ENCODE measurements at regions of chr2 and their contacts with region 1.

Region 1: DNA sequence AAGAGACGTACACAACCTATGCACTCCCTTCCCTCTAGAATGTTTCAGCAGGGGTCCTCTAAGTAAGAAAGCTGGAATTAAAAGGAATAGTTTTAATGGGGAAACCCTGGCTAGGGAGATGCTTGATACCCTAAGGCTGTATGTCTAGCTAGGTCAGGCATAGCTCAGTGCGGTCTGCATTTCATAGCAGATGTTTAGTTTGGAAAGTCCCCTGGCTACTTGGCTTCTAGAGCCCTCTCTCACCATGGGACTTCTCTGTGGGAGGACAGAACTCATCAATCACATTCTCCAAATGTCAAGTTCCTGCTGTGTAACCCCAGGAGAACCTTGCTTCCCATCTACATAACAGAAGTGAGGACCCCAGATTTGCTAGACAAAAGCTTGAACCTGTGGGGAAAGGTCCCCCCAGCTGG is 24.1 kb upstream of the ANXA4 start:
- DNase-seq: no peak
- H3K4me3 Mint-ChIP-seq: no peak overlapping the region
- H3K27ac Mint-ChIP-seq: no peak overlapping the region
- H3K4me1 Mint-ChIP-seq: peaks cover 15% of the 10 kb centered on the region
- H3K27me3 Mint-ChIP-seq: no peaks in the 10 kb centered on the region

Region 2: GRCh38 chr2:69375494-69376353 is 342.1 kb before region 1 on chr2:
- intact Hi-C with region 1: loop called (anchors 5 kb)
- DNase-seq: no peak
- H3K4me3 Mint-ChIP-seq: no peak overlapping the region
- H3K27ac Mint-ChIP-seq: no peak overlapping the region
- H3K4me1 Mint-ChIP-seq: peaks cover 20% of the 10 kb centered on the region
- H3K27me3 Mint-ChIP-seq: no peaks in the 10 kb centered on the region

Region 3: GRCh38 chr2:69559442-69560146 is 158.3 kb before region 1 on chr2:
- intact Hi-C with region 1: loop called (anchors 1 kb)
- DNase-seq: no peak
- H3K4me3 Mint-ChIP-seq: peak overlapping the region; percentile 7
- H3K27ac Mint-ChIP-seq: peak overlapping the region; percentile 52
- H3K4me1 Mint-ChIP-seq: peaks cover 67% of the 10 kb centered on the region
- H3K27me3 Mint-ChIP-seq: no peaks in the 10 kb centered on the region

Region 4: DNA sequence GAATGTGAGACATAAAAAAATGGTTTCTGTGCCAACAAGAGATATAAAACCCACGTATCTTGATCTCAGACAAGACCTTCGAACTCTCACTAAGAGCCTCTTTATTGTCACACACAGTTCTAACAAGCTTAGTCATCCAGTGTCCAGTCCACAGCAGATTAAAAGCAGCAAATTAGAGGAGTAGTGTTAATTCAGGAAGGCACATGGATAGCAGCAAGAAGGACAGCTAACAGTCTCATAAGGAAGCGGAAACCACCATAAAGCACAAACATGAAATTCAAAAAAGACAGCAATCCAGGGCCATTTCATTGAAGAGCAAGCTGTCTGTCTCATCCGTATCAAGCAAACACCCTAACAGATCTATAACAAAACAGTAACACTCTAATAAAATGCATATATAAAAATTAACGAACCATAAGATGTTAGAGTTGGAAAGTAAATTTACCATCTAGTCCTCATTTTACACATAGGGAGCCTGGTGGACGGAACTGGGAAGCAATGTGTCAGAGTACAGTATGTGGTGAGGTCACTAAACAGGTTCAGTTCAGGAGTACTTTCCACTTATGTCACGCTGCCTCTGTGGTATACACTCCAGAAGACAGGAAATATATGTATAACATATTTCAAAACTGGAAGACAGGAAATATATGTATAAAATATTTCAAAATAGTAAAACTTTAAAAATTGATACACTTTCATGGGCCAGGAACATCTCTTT is 92.6 kb before region 1 on chr2:
- intact Hi-C with region 1: loop called (anchors 5 kb)
- DNase-seq: no peak
- H3K4me3 Mint-ChIP-seq: no peak overlapping the region
- H3K27ac Mint-ChIP-seq: no peak overlapping the region
- H3K4me1 Mint-ChIP-seq: peaks cover 15% of the 10 kb centered on the region
- H3K27me3 Mint-ChIP-seq: no peaks in the 10 kb centered on the region

Region 5: GRCh38 chr2:69829256-69830046 is 111.6 kb after region 1 on chr2 and contains the start of gene GMCL1:
- intact Hi-C with region 1: no loop called
- DNase-seq: peak; percentile 99
- H3K4me3 Mint-ChIP-seq: peak within 1 kb of the TSS; percentile 84
- H3K27ac Mint-ChIP-seq: peak within 1 kb of the TSS; percentile 93
- H3K4me1 Mint-ChIP-seq: peaks cover 42% of the 10 kb centered on the region
- H3K27me3 Mint-ChIP-seq: no peaks in the 10 kb centered on the region
- total RNA-seq, gene GMCL1: 29.2 and 29.3 TPM in 2 replicates

Measured in activated T-helper 2 cell treated with anti-CD3 and anti-CD28 coated beads, Interferon-gamma antibody, Interleukin-2, Interleukin-4, amounts not matched to agents 10 μg/mL and 5 μg/mL and 100 μg/mL, durations not matched to agents 14 hours and 24 hours and 36 hours (primary cell).